Calu3 (cell line): ENCODE measurements at regions of chr4 and their contacts with region 1.

Region 1: DNA sequence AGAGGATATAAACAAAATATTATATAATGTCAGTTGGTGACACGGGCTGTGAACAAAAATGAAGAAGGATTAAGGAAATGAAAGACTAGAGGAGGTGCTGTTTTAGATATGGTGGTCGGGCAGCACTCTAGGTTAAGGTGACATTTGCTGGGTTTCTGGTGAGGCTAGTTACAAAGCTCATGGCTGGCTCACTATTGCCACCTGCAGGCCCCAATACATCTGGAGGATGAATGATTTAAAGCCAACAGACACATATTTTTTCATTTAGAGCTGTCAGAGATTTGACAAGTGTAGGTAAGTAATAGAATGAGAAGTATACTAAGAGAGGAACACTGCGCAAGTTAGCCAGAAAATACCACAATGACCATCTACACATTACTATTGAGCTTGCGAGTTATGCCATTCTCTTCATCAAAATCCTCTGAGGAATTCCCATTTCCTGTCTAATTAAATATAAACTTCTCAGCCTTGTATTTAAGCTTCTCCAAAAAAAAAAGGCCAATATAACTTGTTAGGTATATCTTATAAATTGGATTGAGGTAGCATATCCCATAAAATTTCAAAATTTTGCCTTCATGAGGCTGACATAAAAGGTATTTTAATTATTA is 6.4 kb upstream of the FGG start:
- DNase-seq: peak; percentile 67
- H3K4me3 Mint-ChIP-seq: no peak overlapping the region
- H3K27ac Mint-ChIP-seq: no peak overlapping the region
- H3K4me1 Mint-ChIP-seq: no peaks in the 10 kb centered on the region
- H3K27me3 Mint-ChIP-seq: no peaks in the 10 kb centered on the region
- CTCF ChIP-seq: peak; percentile 56

Region 2: DNA sequence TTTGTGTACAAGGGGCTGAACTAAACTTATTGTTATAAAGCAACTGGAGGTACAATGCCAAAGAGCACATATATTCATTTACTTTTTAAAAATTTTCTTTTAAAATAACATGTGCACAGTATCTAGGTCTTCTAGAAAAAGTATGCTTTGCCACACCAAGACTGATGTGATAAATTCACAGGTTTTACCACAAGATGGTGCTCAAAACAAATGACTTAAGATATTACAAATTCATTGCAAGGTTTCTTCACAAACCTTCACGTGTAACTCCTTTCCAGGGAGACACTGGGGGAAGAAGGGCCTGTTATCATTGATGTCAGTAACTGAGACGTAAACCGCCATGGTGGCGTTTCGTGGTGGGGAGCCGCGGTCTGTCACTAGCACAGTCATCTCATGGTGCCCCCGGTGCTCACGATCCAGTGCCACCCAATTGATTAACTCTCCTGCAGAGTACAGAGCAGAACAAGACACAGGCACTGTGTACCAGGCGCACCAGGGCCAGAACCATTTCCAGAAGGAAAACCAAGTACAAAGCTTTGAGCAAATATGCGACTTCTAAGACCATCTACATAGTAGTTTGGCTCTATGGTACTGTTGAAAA is 289.4 kb before region 1 on chr4:
- CTCF ChIA-PET with region 1: no interaction called
- intact Hi-C with region 1: loop called (anchors 10 kb)
- DNase-seq: no peak
- H3K4me3 Mint-ChIP-seq: no peak overlapping the region
- H3K27ac Mint-ChIP-seq: no peak overlapping the region
- H3K4me1 Mint-ChIP-seq: no peaks in the 10 kb centered on the region
- H3K27me3 Mint-ChIP-seq: no peaks in the 10 kb centered on the region
- CTCF ChIP-seq: no peak

Region 3: GRCh38 chr4:154399259-154399974 is 219.4 kb before region 1 on chr4:
- CTCF ChIA-PET with region 1: no interaction called
- intact Hi-C with region 1: loop called (anchors 5 kb)
- DNase-seq: no peak
- H3K4me3 Mint-ChIP-seq: no peak overlapping the region
- H3K27ac Mint-ChIP-seq: no peak overlapping the region
- H3K4me1 Mint-ChIP-seq: no peaks in the 10 kb centered on the region
- H3K27me3 Mint-ChIP-seq: peaks cover 29% of the 10 kb centered on the region
- CTCF ChIP-seq: no peak

Region 4: GRCh38 chr4:154569028-154569427 is 49.8 kb before region 1 on chr4:
- CTCF ChIA-PET with region 1: no interaction called
- intact Hi-C with region 1: no loop called
- DNase-seq: no peak
- H3K4me3 Mint-ChIP-seq: no peak overlapping the region
- H3K27ac Mint-ChIP-seq: no peak overlapping the region
- H3K4me1 Mint-ChIP-seq: no peaks in the 10 kb centered on the region
- H3K27me3 Mint-ChIP-seq: no peaks in the 10 kb centered on the region
- CTCF ChIP-seq: no peak